ENCODE measurements at regions of chr1 and their contacts with region 1.

Region 1: DNA sequence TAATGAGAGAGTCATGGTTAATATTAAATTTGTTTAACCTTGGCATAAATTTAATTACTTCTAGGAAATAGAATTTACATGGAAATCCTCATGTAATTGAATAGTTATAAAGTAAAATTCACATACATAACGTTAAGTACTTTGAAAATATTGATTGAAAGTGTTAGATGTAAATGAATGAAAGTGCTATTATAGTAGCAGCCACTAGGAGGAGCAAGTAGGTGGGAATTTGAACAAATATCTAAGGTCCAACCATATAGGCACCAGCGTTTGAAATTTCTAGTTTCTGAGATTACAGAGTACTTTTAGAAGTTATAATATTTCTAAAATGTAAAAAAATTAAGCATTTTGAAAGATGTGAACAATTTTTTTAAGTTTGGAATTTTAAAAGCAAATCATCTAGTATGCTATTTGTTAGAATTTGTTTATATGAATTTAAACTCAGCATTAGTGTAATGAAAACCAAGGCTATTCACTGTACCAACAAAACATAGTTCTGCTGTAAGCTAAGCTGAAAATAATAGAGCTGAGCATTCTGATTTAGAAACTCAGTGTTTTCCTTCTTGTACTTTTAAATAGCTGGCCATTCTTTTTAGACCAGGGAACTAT is 3.3 kb downstream of the B3GALT2 start:
- DNase-seq: no peak
- ATAC-seq: peak; percentile 47
- H3K4me3 Mint-ChIP-seq: no peak overlapping the region
- H3K27ac Mint-ChIP-seq: no peak overlapping the region
- H3K4me1 Mint-ChIP-seq: peaks cover 34% of the 10 kb centered on the region
- H3K27me3 Mint-ChIP-seq: no peaks in the 10 kb centered on the region

Region 2: GRCh38 chr1:193156826-193157142 is 26.3 kb before region 1 on chr1:
- CTCF ChIA-PET with region 1: interaction called, 13 read pairs
- POLR2A ChIA-PET with region 1: no interaction called
- intact Hi-C with region 1: no loop called
- DNase-seq: no peak
- ATAC-seq: no peak
- H3K4me3 Mint-ChIP-seq: no peak overlapping the region
- H3K27ac Mint-ChIP-seq: no peak overlapping the region
- H3K4me1 Mint-ChIP-seq: peaks cover 21% of the 10 kb centered on the region
- H3K27me3 Mint-ChIP-seq: no peaks in the 10 kb centered on the region

Region 3: GRCh38 chr1:193338194-193338593 is 155.1 kb after region 1 on chr1:
- CTCF ChIA-PET with region 1: interaction called, 4 read pairs
- POLR2A ChIA-PET with region 1: no interaction called
- intact Hi-C with region 1: loop called in 1 of 2 experiments (anchors 10 kb)
- DNase-seq: no peak
- ATAC-seq: no peak
- H3K4me3 Mint-ChIP-seq: no peak overlapping the region
- H3K27ac Mint-ChIP-seq: no peak overlapping the region
- H3K4me1 Mint-ChIP-seq: peaks cover 2% of the 10 kb centered on the region
- H3K27me3 Mint-ChIP-seq: no peaks in the 10 kb centered on the region

Measured in activated CD4-positive, alpha-beta T cell treated with anti-CD3 and anti-CD28 coated beads for 36 hours (primary cell).